Vagina (tissue), 2 donors: ENCODE measurements at regions of chr18 and their contacts with region 1.

Region 1: DNA sequence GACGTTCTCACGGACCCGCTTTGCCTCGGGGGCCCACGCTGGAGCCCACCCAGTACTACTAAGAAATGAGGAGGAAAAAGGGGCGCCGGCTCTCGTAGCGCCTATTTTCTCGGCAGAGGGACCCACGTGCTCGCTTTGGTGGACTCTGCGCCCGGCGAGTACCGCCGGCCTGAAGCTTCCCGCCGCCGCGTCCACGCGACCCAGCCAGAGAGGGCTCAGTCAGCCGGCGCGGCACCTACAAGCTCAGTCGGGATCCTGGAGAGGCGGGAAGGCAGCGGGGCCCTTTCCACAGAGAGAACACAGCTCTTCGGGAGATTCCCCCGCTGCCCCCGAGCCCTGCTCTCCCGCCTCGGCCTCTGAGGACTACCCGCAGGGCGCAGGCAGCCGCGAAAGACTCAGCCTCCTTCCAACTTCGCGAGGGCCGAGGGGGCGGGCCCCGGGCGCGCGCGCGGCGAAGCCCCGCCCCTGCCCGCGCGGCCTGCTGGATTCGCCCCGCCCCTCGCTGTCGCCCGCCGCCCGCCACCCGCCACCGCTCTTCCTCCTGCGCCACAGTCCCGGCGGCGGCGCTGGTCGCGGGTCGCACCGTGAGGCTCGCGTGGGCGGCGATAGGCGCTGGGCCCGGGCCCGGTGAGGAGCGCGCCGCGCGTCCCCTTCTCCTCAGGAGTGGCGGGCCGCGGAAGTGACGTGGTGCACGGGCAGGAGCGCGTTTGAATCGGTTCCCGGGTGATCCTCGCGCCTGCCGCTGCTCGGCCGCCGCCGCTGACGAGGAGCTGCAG is at the start of gene SMCHD1:
- DNase-seq: no peak
- H3K4me3 ChIP-seq: peak within 1 kb of the TSS; percentile 73 to 98
- H3K27ac ChIP-seq: peak within 1 kb of the TSS; percentile 99
- H3K4me1 ChIP-seq: peaks cover 28% of the 10 kb centered on the region
- H3K27me3 ChIP-seq: no peaks in the 10 kb centered on the region
- CTCF ChIP-seq: no peak
- POLR2A ChIP-seq: peak; percentile 25 to 87
- total RNA-seq, gene SMCHD1: 62.4 TPM

Region 2: GRCh38 chr18:2571200-2572143 is 83.9 kb before region 1 on chr18 and contains the starts of genes METTL4 and NDC80:
- intact Hi-C with region 1: loop called (anchors 5 kb)
- DNase-seq: no peak
- H3K4me3 ChIP-seq: peak within 1 kb of the TSS; percentile 64 to 90
- H3K27ac ChIP-seq: peak within 1 kb of the TSS; percentile 93
- H3K4me1 ChIP-seq: peaks cover 28% of the 10 kb centered on the region
- H3K27me3 ChIP-seq: no peaks in the 10 kb centered on the region
- CTCF ChIP-seq: no peak
- POLR2A ChIP-seq: no peak
- total RNA-seq, gene METTL4: 11.5 TPM
- total RNA-seq, gene NDC80: 3.9 TPM